ENCODE measurements at regions of chr20 and their contacts with region 1.

Region 1: DNA sequence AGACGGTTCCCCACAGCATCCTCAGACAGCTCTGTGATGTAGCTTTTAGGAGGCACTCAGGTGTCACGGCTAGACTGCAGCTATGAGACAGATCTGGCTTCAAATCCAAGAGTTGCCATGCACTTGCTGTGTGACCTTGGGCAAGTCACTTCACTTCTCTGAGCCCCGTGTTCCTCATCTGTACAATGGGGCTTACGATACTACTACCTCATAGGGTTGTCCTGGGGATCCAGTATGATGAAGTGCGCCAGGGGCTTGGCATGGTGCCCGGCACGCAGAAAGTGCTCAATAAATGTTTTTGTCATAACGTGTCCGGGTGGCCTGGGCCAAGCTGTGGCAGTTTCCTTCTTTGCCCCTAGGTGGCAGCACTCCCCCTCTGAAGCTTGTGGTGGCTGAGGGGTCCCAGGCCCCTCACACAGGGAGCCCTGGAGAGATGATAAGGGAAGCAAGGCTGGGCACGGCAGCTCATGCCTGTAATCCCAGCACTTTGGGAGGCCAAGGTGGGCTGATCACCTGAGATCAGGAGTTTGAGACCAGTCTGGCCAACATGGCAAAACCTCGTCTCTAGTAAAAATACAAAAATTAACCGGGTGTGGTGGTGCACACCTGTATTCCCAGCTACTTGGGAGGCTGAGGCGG is 19.1 kb upstream of the CHMP4B start:
- DNase-seq: peak; percentile 69
- H3K4me3 ChIP-seq: no peak overlapping the region
- H3K27ac ChIP-seq: no peak overlapping the region
- H3K4me1 ChIP-seq: peaks cover 5% of the 10 kb centered on the region
- H3K27me3 ChIP-seq: no peaks in the 10 kb centered on the region
- CTCF ChIP-seq: peak; percentile 79

Region 2: GRCh38 chr20:33731693-33732165 is 60.3 kb before region 1 on chr20 and contains the start of gene ZNF341:
- intact Hi-C with region 1: loop called (anchors 5 kb)
- DNase-seq: peak; percentile 88
- H3K4me3 ChIP-seq: peak within 1 kb of the TSS; percentile 50
- H3K27ac ChIP-seq: peak within 1 kb of the TSS; percentile 97
- H3K4me1 ChIP-seq: peaks cover 3% of the 10 kb centered on the region
- H3K27me3 ChIP-seq: no peaks in the 10 kb centered on the region
- CTCF ChIP-seq: peak; percentile 83
- total RNA-seq, gene ZNF341: 2.7 to 6.1 TPM

Region 3: GRCh38 chr20:33843854-33844253 is 51.8 kb after region 1 on chr20:
- intact Hi-C with region 1: no loop called
- DNase-seq: peak; percentile 42
- H3K4me3 ChIP-seq: no peak overlapping the region
- H3K27ac ChIP-seq: no peak overlapping the region
- H3K4me1 ChIP-seq: peaks cover 38% of the 10 kb centered on the region
- H3K27me3 ChIP-seq: no peaks in the 10 kb centered on the region
- CTCF ChIP-seq: no peak

Region 4: GRCh38 chr20:33909331-33909921 is 117.3 kb after region 1 on chr20:
- intact Hi-C with region 1: loop called (anchors 10 kb)
- DNase-seq: no peak
- H3K4me3 ChIP-seq: no peak overlapping the region
- H3K27ac ChIP-seq: no peak overlapping the region
- H3K4me1 ChIP-seq: no peaks in the 10 kb centered on the region
- H3K27me3 ChIP-seq: no peaks in the 10 kb centered on the region
- CTCF ChIP-seq: no peak

Measured in colonic mucosa (tissue), 4 donors.